GM12878 (cell line): ENCODE measurements at regions of chr6 and their contacts with region 1.

Region 1: GRCh38 chr6:32894080-32895005 is 40.4 kb downstream of the PSMB9 start:
- DNase-seq: peak; percentile 91
- ATAC-seq: peak; percentile 98
- H3K4me3 ChIP-seq: peak overlapping the region; percentile 81
- H3K27ac ChIP-seq: peak overlapping the region; percentile 90
- H3K4me1 ChIP-seq: peaks cover 12% of the 10 kb centered on the region
- H3K27me3 ChIP-seq: no peaks in the 10 kb centered on the region
- CTCF ChIP-seq: no peak; a peak in 1 of 6 replicates
- EP300 ChIP-seq: no peak
- POLR2A ChIP-seq: peak; percentile 83
- RAD21 ChIP-seq: no peak

Region 2: GRCh38 chr6:32519118-32519909 is 375.0 kb before region 1 on chr6:
- CTCF ChIA-PET with region 1: no interaction called
- POLR2A ChIA-PET with region 1: no interaction called
- RAD21 ChIA-PET with region 1: no interaction called
- SMC1A ChIA-PET with region 1: no interaction called
- in situ Hi-C with region 1: no loop called
- intact Hi-C with region 1: no loop called
- DNase-seq: no peak
- ATAC-seq: no peak
- H3K4me3 ChIP-seq: no peak overlapping the region
- H3K27ac ChIP-seq: no peak overlapping the region
- H3K4me1 ChIP-seq: no peaks in the 10 kb centered on the region
- H3K27me3 ChIP-seq: no peaks in the 10 kb centered on the region
- CTCF ChIP-seq: no peak
- EP300 ChIP-seq: no peak
- POLR2A ChIP-seq: no peak
- RAD21 ChIP-seq: no peak

Region 3: DNA sequence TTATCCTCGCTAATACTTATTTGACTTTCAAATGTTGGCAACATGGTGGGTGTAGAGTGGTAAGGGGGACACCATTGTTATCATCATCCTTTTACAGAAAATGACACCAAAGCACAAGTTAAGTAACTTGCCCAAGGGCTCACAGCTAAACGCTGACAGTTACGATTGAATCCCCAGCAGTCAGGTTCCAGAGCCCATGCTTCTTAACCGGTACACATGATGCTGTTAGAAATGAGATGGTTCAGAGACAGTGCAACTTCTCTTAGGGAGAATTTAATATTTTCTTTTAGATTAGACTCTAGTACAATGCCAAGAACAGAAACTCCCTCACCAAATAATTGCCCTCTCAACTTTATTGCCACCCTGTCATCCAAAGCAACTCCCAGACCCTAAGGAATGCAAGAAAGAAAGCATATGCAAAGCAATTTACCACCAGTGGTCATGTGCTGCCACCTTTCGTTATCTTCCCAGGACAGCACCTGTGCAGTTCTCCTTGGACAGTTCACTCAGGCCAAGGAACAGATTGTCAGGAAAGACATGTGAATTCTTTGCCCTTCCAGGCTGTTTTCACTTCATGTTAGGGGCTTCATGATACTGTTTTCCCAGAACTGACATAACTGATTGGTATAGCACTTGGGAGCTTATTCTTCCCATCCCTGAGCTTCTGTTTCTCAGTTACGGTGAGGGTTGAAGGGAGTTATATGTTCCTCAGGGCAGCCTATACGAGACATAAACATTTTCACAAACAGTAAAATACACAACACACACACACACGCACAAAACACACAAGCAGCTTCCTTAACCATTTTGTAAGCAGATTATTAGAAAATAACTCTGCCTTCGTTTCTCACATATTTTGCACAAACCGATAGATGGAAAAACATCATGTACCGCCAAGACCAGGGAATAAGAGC is 53.5 kb after region 1 on chr6:
- CTCF ChIA-PET with region 1: interaction called, 31 read pairs
- POLR2A ChIA-PET with region 1: interaction called, 20 read pairs
- RAD21 ChIA-PET with region 1: interaction called, 22 read pairs
- SMC1A ChIA-PET with region 1: interaction called, 19 read pairs
- in situ Hi-C with region 1: no loop called
- intact Hi-C with region 1: loop called (anchors 1 kb)
- DNase-seq: peak; percentile 56
- ATAC-seq: peak; percentile 13; the same call in 2 of the 3 replicates
- H3K4me3 ChIP-seq: peak overlapping the region; percentile 22
- H3K27ac ChIP-seq: peak overlapping the region; percentile 59
- H3K4me1 ChIP-seq: peaks cover 55% of the 10 kb centered on the region
- H3K27me3 ChIP-seq: no peaks in the 10 kb centered on the region
- CTCF ChIP-seq: peak; percentile 69 to 88 (median 82)
- EP300 ChIP-seq: no peak
- POLR2A ChIP-seq: no peak
- RAD21 ChIP-seq: peak; percentile 92